ENCODE measurements at regions of chr3 and their contacts with region 1.

Region 1: DNA sequence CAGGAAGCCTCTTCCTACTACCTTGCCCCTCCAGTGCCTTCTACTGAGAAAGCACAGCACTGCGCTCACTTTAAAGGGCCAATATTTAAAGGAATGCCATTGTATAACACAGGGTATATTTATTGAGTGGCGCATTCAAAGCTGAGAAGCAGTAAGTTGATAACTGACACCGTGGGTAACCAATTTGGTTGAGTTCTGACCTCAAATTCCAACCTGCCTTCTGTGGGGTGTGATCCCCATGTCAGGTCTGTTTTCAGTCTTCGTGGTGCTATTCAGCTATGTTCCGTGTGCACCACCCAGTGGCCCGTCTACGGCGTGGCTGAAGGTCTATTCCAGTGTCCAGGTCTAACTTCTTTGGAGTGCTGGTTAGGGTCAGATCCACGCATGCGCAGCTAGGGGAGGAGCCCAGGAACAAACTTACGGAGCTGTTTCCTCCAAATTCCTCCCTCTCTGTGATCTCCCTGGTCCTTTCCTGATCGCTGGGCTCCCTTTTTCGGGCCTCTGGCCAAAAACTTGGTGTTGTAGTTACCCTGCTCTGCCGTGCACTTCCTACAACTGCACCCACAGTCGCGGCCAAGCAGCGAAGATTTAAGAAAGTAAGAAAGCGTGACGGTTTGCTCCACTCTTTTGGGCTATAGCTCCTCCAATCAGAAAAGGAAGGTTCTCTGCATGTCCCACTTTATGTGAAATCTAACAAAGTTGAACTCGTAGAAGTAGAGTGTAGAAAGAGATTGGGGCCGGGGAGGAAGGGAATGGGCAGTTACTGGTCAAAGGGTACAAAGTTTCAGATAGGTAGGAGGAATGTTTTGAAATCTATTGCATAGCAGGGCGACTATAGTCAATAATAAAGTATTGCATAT is 7.7 kb downstream of the LRRC2 start:
- DNase-seq: peak; percentile 95 to 98 (median 98)
- ATAC-seq: peak; percentile 100
- H3K4me3 ChIP-seq: peak overlapping the region; percentile 28
- H3K27ac ChIP-seq: peak overlapping the region; percentile 21; the same call in 2 of the 3 replicates
- H3K4me1 ChIP-seq: peaks cover 11 to 12% of the 10 kb centered on the region in 2 experiments; a peak in 4 of 5 replicates
- H3K27me3 ChIP-seq: no peaks in the 10 kb centered on the region; a peak in 1 of 5 replicates
- CTCF ChIP-seq: peak; percentile 98 to 99 (median 99)
- EP300 ChIP-seq: peak; percentile 40; the same call in 1 of the 2 replicates
- POLR2A ChIP-seq: no peak
- RAD21 ChIP-seq: peak; percentile 100

Region 2: DNA sequence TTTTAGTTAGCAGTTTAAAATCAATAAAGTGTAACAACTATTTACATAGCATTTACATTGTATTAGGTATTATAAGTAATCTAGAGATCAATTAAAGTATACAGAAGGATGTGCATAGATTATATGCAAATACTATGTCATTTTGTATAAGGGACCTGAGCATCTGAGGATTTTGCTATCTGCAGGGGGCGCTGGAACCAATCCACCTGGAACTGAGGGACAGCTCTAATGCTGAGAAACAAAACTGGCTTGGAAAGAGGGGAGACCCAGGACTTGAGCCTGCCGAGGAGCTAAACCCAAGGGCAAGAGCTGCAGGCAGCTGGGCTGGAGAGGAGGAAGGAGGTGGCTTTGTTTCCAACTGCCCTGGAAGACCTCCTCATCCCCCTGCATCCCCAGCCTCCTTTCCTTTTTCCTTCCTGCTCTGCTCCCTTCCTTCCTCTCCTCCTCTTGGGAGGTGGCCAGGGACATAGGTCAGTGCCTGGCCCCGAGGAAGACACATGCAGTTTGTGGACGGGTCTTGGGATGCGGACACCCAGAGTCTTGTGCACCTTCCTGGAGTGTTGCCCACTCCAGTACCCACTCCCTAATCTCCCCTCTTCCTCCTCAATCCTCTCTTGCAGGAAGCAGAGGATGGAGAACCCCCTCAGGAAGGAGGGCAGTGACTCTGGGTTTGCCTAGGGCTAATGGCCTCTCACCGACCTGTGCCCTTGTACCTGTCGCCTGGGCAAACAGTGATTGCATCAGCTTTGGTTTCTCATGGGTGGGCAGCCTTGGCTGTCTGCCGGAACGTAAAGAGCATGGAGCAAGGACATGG is 61.5 kb before region 1 on chr3:
- CTCF ChIA-PET with region 1: interaction called, 177 read pairs
- POLR2A ChIA-PET with region 1: interaction called, 4 read pairs
- in situ Hi-C with region 1: no loop called
- intact Hi-C with region 1: loop called (anchors 1 kb)
- DNase-seq: peak in 2 of 4 experiments; percentile 62 to 76
- ATAC-seq: peak; percentile 78
- H3K4me3 ChIP-seq: no peak overlapping the region
- H3K27ac ChIP-seq: no peak overlapping the region
- H3K4me1 ChIP-seq: peaks cover 38 to 64% of the 10 kb centered on the region in 2 experiments; a peak in 4 of 5 replicates
- H3K27me3 ChIP-seq: no peaks in the 10 kb centered on the region
- CTCF ChIP-seq: peak; percentile 75 to 88 (median 85)
- EP300 ChIP-seq: no peak
- POLR2A ChIP-seq: no peak
- RAD21 ChIP-seq: peak; percentile 73 to 86

Region 3: GRCh38 chr3:46629551-46630517 is 71.4 kb after region 1 on chr3:
- CTCF ChIA-PET with region 1: interaction called, 5 read pairs
- POLR2A ChIA-PET with region 1: no interaction called
- in situ Hi-C with region 1: loop called (anchors 5 kb)
- intact Hi-C with region 1: loop called (anchors 1 kb)
- DNase-seq: peak; percentile 85 to 88 (median 88)
- ATAC-seq: peak; percentile 100
- H3K4me3 ChIP-seq: no peak overlapping the region
- H3K27ac ChIP-seq: no peak overlapping the region
- H3K4me1 ChIP-seq: peaks cover 4 to 8% of the 10 kb centered on the region in 2 experiments; a peak in 3 of 5 replicates
- H3K27me3 ChIP-seq: peaks cover 10 to 38% of the 10 kb centered on the region in 2 experiments; a peak in 3 of 5 replicates
- CTCF ChIP-seq: peak; percentile 100
- EP300 ChIP-seq: no peak
- POLR2A ChIP-seq: no peak
- RAD21 ChIP-seq: peak; percentile 95 to 96